Dorsolateral prefrontal cortex (tissue), 120 donors: ENCODE measurements at regions of chr9 and their contacts with region 1.

Region 1: GRCh38 chr9:105064315-105065097 is 136.6 kb upstream of the ABCA1 start:
- DNase-seq: peak; percentile 33 to 86 (median 80)
- H3K4me3 ChIP-seq: peak overlapping the region in 42 of 59 donors; percentile 2 to 59 (median 26)
- H3K27ac ChIP-seq: peak overlapping the region in 33 of 59 donors; percentile 5 to 76 (median 41)
- H3K27me3 ChIP-seq: no peaks in the 10 kb centered on the region
- CTCF ChIP-seq: peak in 17 of 56 donors; percentile 7 to 43 (median 20)

Region 2: GRCh38 chr9:105146677-105147076 is 82.2 kb after region 1 on chr9:
- intact Hi-C with region 1: loop called in 1 of 2 experiments (anchors 2 kb)
- DNase-seq: peak in 3 of 10 donors; percentile 6 to 49 (median 23)
- H3K4me3 ChIP-seq: peak overlapping the region in 1 of 59 donors; percentile 28
- H3K27ac ChIP-seq: no peak overlapping the region
- H3K27me3 ChIP-seq: no peaks in the 10 kb centered on the region
- CTCF ChIP-seq: no peak